GM12878 (cell line): ENCODE measurements at regions of chr9 and their contacts with region 1.

Region 1: GRCh38 chr9:110099236-110100095 is 108.5 kb downstream of the C9orf152 start:
- DNase-seq: no peak
- ATAC-seq: no peak
- H3K4me3 ChIP-seq: no peak overlapping the region
- H3K27ac ChIP-seq: no peak overlapping the region
- H3K4me1 ChIP-seq: peaks cover 42% of the 10 kb centered on the region
- H3K27me3 ChIP-seq: no peaks in the 10 kb centered on the region
- CTCF ChIP-seq: no peak
- EP300 ChIP-seq: no peak
- POLR2A ChIP-seq: no peak
- RAD21 ChIP-seq: no peak

Region 2: GRCh38 chr9:110058304-110058953 is 41.0 kb before region 1 on chr9:
- CTCF ChIA-PET with region 1: interaction called, 4 read pairs
- POLR2A ChIA-PET with region 1: interaction called, 7 read pairs
- RAD21 ChIA-PET with region 1: interaction called, 14 read pairs
- SMC1A ChIA-PET with region 1: interaction called, 10 read pairs
- in situ Hi-C with region 1: no loop called
- intact Hi-C with region 1: loop called (anchors 5 kb)
- DNase-seq: no peak
- ATAC-seq: peak; percentile 83
- H3K4me3 ChIP-seq: peak overlapping the region; percentile 30; the same call in 1 of the 2 replicates
- H3K27ac ChIP-seq: no peak overlapping the region; the same call in 1 of the 2 replicates
- H3K4me1 ChIP-seq: peaks cover 19% of the 10 kb centered on the region
- H3K27me3 ChIP-seq: no peaks in the 10 kb centered on the region
- CTCF ChIP-seq: peak; percentile 63 to 74 (median 72)
- EP300 ChIP-seq: no peak
- POLR2A ChIP-seq: no peak
- RAD21 ChIP-seq: peak; percentile 98

Region 3: GRCh38 chr9:110088099-110088498 is 11.4 kb before region 1 on chr9:
- CTCF ChIA-PET with region 1: interaction called, 14 read pairs
- POLR2A ChIA-PET with region 1: interaction called, 6 read pairs
- RAD21 ChIA-PET with region 1: interaction called, 10 read pairs
- SMC1A ChIA-PET with region 1: interaction called, 14 read pairs
- in situ Hi-C with region 1: no loop called
- intact Hi-C with region 1: no loop called
- DNase-seq: no peak
- ATAC-seq: peak; percentile 84
- H3K4me3 ChIP-seq: no peak overlapping the region
- H3K27ac ChIP-seq: no peak overlapping the region
- H3K4me1 ChIP-seq: peaks cover 6% of the 10 kb centered on the region
- H3K27me3 ChIP-seq: no peaks in the 10 kb centered on the region
- CTCF ChIP-seq: no peak
- EP300 ChIP-seq: no peak
- POLR2A ChIP-seq: no peak
- RAD21 ChIP-seq: no peak

Region 4: GRCh38 chr9:110116543-110116885 is 17.0 kb after region 1 on chr9:
- CTCF ChIA-PET with region 1: interaction called, 10 read pairs
- POLR2A ChIA-PET with region 1: interaction called, 9 read pairs
- RAD21 ChIA-PET with region 1: interaction called, 340 read pairs
- SMC1A ChIA-PET with region 1: interaction called, 63 read pairs
- in situ Hi-C with region 1: no loop called
- intact Hi-C with region 1: no loop called
- DNase-seq: no peak
- ATAC-seq: peak; percentile 18; the same call in 1 of the 3 replicates
- H3K4me3 ChIP-seq: no peak overlapping the region
- H3K27ac ChIP-seq: no peak overlapping the region
- H3K4me1 ChIP-seq: peaks cover 6% of the 10 kb centered on the region
- H3K27me3 ChIP-seq: no peaks in the 10 kb centered on the region
- CTCF ChIP-seq: no peak
- EP300 ChIP-seq: no peak
- POLR2A ChIP-seq: no peak
- RAD21 ChIP-seq: no peak

Region 5: GRCh38 chr9:110143950-110144545 is 44.6 kb after region 1 on chr9:
- CTCF ChIA-PET with region 1: interaction called, 13 read pairs
- POLR2A ChIA-PET with region 1: interaction called, 30 read pairs
- RAD21 ChIA-PET with region 1: interaction called, 282 read pairs
- SMC1A ChIA-PET with region 1: interaction called, 122 read pairs
- in situ Hi-C with region 1: no loop called
- intact Hi-C with region 1: loop called (anchors 1 kb)
- DNase-seq: no peak
- ATAC-seq: peak; percentile 79
- H3K4me3 ChIP-seq: peak overlapping the region; percentile 37; the same call in 1 of the 2 replicates
- H3K27ac ChIP-seq: peak overlapping the region; percentile 81
- H3K4me1 ChIP-seq: peaks cover 61% of the 10 kb centered on the region
- H3K27me3 ChIP-seq: no peaks in the 10 kb centered on the region
- CTCF ChIP-seq: peak in 2 of 3 experiments; percentile 16 to 21; a peak in 1 of 6 replicates
- EP300 ChIP-seq: no peak
- POLR2A ChIP-seq: peak; percentile 48; the same call in 1 of the 2 replicates
- RAD21 ChIP-seq: no peak

Region 6: GRCh38 chr9:111136180-111136579 is 1036.7 kb after region 1 on chr9:
- CTCF ChIA-PET with region 1: no interaction called
- POLR2A ChIA-PET with region 1: no interaction called
- RAD21 ChIA-PET with region 1: no interaction called
- SMC1A ChIA-PET with region 1: no interaction called
- in situ Hi-C with region 1: no loop called
- intact Hi-C with region 1: no loop called
- DNase-seq: no peak
- ATAC-seq: no peak
- H3K4me3 ChIP-seq: no peak overlapping the region
- H3K27ac ChIP-seq: no peak overlapping the region
- H3K4me1 ChIP-seq: no peaks in the 10 kb centered on the region
- H3K27me3 ChIP-seq: no peaks in the 10 kb centered on the region
- CTCF ChIP-seq: no peak
- EP300 ChIP-seq: no peak
- POLR2A ChIP-seq: no peak
- RAD21 ChIP-seq: no peak